ENCODE measurements at regions of chr18 and their contacts with region 1.

Region 1: DNA sequence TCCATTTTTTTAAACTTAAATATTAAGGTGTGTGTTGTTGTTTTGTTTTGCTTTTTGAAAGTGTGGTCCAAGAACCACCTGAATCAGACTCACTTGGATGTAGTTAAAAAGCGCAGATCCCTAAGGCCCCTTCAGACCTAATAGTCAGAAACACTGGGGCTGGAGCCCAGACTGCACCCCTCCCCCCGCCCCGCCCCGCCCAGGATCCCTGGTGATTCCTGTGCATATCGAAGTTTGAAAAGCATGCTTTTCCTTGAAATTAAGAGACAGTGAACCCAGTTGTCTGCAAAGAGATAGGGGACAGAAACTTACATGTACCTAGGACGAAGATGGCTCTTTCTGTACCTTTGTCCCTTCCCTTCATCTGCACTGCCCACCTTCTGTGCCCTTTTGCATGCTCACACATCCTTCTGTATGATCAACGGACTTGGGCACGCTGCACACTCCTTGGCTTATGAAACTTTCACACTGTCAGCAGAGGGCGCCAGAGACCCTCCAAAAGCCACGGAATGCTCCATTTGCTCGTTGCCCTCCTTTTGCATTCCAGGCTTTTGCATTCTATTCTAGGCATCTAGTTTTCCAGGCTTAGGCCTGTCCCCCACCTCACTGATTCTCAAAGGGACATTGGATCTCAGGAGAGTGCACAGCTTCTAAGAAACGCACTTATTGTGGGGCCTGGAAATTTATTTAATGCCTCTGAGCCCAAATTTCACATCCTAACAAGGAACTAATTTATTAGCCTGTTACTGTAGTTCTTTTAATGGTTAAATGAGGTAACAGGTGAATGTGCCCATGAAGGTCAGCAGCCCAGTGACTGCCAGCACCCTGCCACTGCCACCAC is 32.8 kb upstream of the SLC14A1 start:
- DNase-seq: peak in 5 of 6 donors; percentile 46 to 85 (median 65)
- ATAC-seq: peak; percentile 82 to 98 (median 96)
- H3K4me3 ChIP-seq: no peak overlapping the region
- H3K27ac ChIP-seq: no peak overlapping the region
- H3K4me1 ChIP-seq: no peaks in the 10 kb centered on the region
- H3K27me3 ChIP-seq: no peaks in the 10 kb centered on the region
- CTCF ChIP-seq: peak; percentile 57 to 66 (median 62)

Region 2: GRCh38 chr18:45879681-45880655 is 188.8 kb after region 1 on chr18:
- intact Hi-C with region 1: loop called in 2 of 3 experiments (anchors 5 to 10 kb)
- DNase-seq: peak; percentile 28 to 90 (median 70)
- ATAC-seq: peak; percentile 85 to 100 (median 99)
- H3K4me3 ChIP-seq: no peak overlapping the region
- H3K27ac ChIP-seq: no peak overlapping the region
- H3K4me1 ChIP-seq: no peaks in the 10 kb centered on the region
- H3K27me3 ChIP-seq: no peaks in the 10 kb centered on the region
- CTCF ChIP-seq: peak; percentile 95 to 100 (median 98)

Measured in pancreas (tissue), 10 donors.